Aorta (tissue), 5 donors: ENCODE measurements at regions of chr1 and their contacts with region 1.

Region 1: GRCh38 chr1:212477014-212477679 is 44.4 kb downstream of the NENF start:
- DNase-seq: peak; percentile 86 to 88
- ATAC-seq: peak; percentile 92
- H3K4me3 ChIP-seq: no peak overlapping the region
- H3K27ac ChIP-seq: no peak overlapping the region
- H3K4me1 ChIP-seq: peaks cover 0 to 3% of the 10 kb centered on the region in 2 donors
- H3K27me3 ChIP-seq: no peaks in the 10 kb centered on the region

Region 2: GRCh38 chr1:212353181-212353580 is 124.0 kb before region 1 on chr1:
- intact Hi-C with region 1: no loop called
- DNase-seq: no peak
- ATAC-seq: no peak
- H3K4me3 ChIP-seq: no peak overlapping the region
- H3K27ac ChIP-seq: no peak overlapping the region
- H3K4me1 ChIP-seq: no peaks in the 10 kb centered on the region
- H3K27me3 ChIP-seq: no peaks in the 10 kb centered on the region

Region 3: DNA sequence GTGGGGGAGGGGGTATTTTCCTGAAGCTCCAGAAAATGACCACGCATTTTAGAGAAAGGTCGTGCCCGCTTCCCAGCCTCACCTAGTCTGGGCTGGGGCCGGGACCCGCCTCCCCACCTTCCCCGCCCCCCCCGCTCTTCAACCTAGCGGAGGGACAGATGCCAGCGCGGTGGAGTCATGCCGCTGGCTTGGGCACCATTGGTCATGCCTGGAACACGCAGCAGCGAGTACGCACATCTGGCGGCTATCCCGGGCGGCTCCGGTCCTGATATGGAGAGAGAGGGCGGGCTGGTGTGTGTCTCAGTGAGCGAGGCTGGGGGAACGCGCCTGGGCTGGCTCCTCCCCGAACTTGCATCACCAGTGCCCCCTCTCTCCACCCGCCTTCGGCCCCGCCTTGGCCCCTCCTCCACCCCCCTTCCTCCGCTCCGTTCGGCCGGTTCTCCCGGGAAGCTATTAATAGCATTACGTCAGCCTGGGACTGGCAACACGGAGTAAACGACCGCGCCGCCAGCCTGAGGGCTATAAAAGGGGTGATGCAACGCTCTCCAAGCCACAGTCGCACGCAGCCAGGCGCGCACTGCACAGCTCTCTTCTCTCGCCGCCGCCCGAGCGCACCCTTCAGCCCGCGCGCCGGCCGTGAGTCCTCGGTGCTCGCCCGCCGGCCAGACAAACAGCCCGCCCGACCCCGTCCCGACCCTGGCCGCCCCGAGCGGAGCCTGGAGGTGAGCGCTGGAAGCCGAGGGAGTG is 131.2 kb after region 1 on chr1 and contains the start of gene ATF3:
- intact Hi-C with region 1: loop called (anchors 2 to 5 kb)
- DNase-seq: peak; percentile 100
- ATAC-seq: peak; percentile 96
- H3K4me3 ChIP-seq: peak within 1 kb of the TSS; percentile 87 to 92
- H3K27ac ChIP-seq: peak within 1 kb of the TSS; percentile 81 to 92
- H3K4me1 ChIP-seq: peaks cover 9 to 13% of the 10 kb centered on the region in 2 donors
- H3K27me3 ChIP-seq: peaks cover 0 to 2% of the 10 kb centered on the region in 2 donors
- total RNA-seq, gene ATF3: 28.1 to 265 TPM